Left ventricle myocardium superior (tissue), 1 donor: ENCODE measurements at regions of chr18 and their contacts with region 1.

Region 1: GRCh38 chr18:68660354-68661183 is 54.3 kb downstream of the TMX3 start:
- DNase-seq: no peak
- ATAC-seq: no peak

Region 2: GRCh38 chr18:67217551-67218166 is 1442.9 kb before region 1 on chr18:
- intact Hi-C with region 1: loop called (anchors 2 kb)
- DNase-seq: no peak
- ATAC-seq: peak; percentile 53

Region 3: DNA sequence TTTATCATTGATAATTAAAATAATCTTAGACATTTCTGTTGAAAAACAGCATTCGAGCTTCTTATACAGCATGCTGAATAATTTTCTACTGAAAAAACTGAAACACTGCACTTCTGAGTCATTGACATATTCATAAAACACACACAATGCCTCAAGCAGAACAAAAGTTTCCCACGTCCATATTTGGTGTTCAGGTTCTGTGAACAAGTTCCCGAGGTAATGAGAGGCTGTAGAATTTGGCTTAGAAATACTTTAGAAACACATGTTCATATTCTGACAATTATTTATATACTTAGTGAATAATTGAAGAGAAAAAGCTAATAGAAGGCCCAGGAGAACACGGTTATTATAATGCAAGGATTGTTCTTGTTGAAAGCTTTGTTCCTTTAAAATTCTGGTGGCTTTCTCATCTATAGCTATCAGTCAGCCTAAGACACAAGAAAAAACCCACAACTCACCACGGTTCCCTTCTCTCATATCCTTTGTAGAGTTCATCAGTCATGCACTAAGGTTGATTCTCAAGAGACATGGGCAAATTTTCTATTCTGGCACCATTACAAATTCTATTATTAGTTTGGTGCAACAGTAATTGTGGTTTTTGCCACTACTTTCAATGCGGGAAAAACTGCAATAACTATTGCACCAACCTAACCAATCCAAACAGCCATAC is 140.0 kb before region 1 on chr18:
- intact Hi-C with region 1: no loop called
- DNase-seq: no peak
- ATAC-seq: no peak

Region 4: GRCh38 chr18:68780802-68781635 is 120.5 kb after region 1 on chr18:
- intact Hi-C with region 1: no loop called
- DNase-seq: no peak
- ATAC-seq: no peak

Region 5: DNA sequence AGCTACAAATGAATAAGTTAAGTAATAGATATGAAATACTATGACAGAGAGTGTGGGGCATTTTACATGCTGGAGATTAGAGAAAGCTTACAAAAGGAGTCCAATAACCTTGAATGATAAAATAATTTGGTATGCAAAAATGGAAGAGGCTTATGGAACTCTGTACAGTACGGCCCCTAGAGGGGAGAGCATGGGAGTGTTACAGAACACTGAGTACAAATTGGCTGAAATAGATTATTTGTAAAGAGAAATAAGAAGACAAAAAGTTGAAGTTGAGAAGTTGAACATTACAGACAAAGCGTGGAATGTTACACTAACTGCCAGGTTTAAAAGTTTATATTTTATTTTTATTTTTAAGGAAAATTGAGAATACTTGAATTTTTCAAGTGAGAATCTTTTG is 548.0 kb after region 1 on chr18:
- intact Hi-C with region 1: no loop called
- DNase-seq: no peak
- ATAC-seq: no peak

Region 6: GRCh38 chr18:70107091-70107490 is 1446.5 kb after region 1 on chr18:
- intact Hi-C with region 1: no loop called
- DNase-seq: no peak
- ATAC-seq: no peak